ENCODE measurements at regions of chr9 and their contacts with region 1.

Region 1: DNA sequence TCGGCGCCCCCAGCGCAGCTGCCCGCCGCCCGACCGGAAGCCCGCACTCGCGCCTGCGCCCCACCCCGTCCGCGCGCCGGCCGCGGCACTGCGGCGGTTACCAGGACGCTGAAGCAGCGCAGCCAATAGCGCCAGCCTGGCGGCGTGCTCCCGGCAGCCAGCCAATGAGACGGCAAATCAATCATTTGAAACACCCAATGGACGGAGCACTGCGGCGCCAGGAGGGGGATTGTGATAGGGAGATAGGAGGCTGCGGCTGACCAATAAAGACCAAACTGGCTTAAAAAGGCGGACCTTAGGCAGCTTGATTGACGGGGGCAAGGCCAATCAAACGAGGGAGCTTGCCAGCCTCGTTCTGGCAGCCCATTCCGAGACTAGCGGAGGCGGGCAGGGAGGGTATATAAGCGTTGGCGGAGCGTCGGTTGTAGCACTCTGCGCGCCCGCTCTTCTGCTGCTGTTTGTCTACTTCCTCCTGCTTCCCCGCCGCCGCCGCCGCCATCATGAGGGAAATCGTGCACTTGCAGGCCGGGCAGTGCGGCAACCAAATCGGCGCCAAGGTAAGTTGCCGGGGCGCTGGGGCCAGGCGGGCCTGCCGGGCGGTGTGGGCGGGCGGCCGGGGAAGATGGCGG is at the start of gene TUBB4B:
- DNase-seq: peak; percentile 100
- H3K4me3 ChIP-seq: peak within 1 kb of the TSS; percentile 97
- H3K27ac ChIP-seq: peak within 1 kb of the TSS; percentile 98
- H3K4me1 ChIP-seq: peaks cover 44% of the 10 kb centered on the region
- H3K27me3 ChIP-seq: no peaks in the 10 kb centered on the region
- CTCF ChIP-seq: no peak
- total RNA-seq, gene TUBB4B: 645 and 714 TPM in 2 replicates

Region 2: DNA sequence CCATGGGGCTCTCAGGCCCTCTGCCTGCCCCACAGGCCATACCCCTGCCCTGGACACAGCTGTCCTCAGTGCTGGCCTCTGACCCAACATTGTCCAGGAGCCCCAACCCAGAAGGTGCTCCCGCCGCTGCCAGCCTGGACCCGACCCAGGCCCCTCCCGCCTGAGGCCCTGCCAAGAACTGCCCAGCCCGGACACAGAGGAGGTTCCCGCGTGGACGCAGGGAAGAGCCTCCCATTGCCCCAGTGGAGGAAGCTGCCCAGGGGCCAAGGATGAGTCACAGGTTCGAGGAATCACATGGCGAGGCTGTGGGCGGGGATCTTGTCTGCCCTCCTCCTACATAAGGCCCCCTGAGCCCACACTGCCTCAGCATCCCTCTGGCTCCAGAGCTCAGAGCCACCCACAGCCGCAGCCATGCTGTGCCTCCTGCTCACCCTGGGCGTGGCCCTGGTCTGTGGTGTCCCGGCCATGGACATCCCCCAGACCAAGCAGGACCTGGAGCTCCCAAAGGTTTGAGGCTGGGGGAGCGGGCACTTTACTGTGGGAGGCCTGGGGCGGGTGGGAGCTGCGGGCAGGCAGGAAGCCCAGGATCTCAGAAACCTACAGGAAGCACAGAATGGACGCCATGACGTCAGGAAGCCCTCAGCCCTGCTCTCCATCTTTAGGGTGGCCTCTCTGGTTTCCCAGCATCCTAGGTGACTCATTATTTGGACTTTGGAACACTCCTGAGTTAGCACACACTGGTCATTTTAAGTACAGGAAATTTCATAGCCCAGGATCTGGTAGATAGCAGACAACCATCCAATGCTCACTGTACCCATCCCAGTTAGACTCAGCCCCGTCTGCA is 1679.4 kb before region 1 on chr9 and contains the start of gene PAEP:
- CTCF ChIA-PET with region 1: no interaction called
- POLR2A ChIA-PET with region 1: no interaction called
- intact Hi-C with region 1: no loop called
- DNase-seq: no peak
- H3K4me3 ChIP-seq: no peak within 1 kb of the TSS
- H3K27ac ChIP-seq: no peak within 1 kb of the TSS
- H3K4me1 ChIP-seq: no peaks in the 10 kb centered on the region
- H3K27me3 ChIP-seq: peaks cover 4% of the 10 kb centered on the region
- CTCF ChIP-seq: no peak
- total RNA-seq, gene PAEP: not detected in 2 replicates

Region 3: DNA sequence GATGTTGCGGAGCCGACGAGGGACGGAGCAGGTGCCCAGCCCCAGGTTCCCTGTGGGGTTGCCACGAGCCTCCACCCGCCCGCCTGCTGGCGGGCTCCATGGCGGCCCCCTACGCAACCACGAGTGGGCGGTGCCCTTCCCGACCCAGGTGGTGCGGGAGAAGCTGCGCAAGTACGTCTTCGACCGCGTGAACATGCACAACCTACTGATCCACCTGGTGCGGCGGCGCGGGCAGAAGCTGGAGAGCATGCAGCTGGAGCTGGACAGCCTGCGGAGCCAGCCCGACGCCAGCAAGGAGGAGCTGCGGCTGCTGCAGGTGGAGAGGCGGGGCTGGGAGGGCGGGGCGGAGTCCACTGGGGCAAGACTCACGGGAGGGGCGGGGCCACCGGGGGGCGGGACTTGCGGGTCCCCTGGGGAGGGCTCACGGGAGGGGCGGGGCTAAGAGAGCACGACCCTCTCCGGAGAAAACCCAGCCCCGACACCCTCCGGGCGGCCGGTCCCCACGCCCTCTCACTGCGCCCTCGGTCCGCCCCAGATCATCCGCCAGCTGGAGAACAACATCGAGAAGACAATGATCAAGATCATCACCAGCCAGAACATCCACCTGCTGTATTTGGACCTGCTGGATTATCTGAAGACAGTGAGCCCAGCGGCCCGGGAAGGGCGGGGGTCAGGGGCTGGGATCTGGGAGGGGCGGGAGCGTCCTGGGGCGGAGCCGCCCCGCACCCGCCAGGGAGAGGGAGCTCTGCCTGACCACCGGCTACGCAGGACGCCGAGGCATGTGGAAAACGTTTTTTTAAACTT is 440.9 kb before region 1 on chr9:
- CTCF ChIA-PET with region 1: interaction called, 13 read pairs
- POLR2A ChIA-PET with region 1: no interaction called
- intact Hi-C with region 1: no loop called
- DNase-seq: peak; percentile 86
- H3K4me3 ChIP-seq: peak overlapping the region; percentile 55
- H3K27ac ChIP-seq: no peak overlapping the region
- H3K4me1 ChIP-seq: peaks cover 22% of the 10 kb centered on the region
- H3K27me3 ChIP-seq: no peaks in the 10 kb centered on the region
- CTCF ChIP-seq: no peak

Region 4: GRCh38 chr9:137123468-137123837 is 117.5 kb before region 1 on chr9:
- CTCF ChIA-PET with region 1: interaction called, 10 read pairs
- POLR2A ChIA-PET with region 1: no interaction called
- intact Hi-C with region 1: no loop called
- DNase-seq: no peak
- H3K4me3 ChIP-seq: no peak overlapping the region
- H3K27ac ChIP-seq: no peak overlapping the region
- H3K4me1 ChIP-seq: peaks cover 10% of the 10 kb centered on the region
- H3K27me3 ChIP-seq: no peaks in the 10 kb centered on the region
- CTCF ChIP-seq: no peak

Region 5: DNA sequence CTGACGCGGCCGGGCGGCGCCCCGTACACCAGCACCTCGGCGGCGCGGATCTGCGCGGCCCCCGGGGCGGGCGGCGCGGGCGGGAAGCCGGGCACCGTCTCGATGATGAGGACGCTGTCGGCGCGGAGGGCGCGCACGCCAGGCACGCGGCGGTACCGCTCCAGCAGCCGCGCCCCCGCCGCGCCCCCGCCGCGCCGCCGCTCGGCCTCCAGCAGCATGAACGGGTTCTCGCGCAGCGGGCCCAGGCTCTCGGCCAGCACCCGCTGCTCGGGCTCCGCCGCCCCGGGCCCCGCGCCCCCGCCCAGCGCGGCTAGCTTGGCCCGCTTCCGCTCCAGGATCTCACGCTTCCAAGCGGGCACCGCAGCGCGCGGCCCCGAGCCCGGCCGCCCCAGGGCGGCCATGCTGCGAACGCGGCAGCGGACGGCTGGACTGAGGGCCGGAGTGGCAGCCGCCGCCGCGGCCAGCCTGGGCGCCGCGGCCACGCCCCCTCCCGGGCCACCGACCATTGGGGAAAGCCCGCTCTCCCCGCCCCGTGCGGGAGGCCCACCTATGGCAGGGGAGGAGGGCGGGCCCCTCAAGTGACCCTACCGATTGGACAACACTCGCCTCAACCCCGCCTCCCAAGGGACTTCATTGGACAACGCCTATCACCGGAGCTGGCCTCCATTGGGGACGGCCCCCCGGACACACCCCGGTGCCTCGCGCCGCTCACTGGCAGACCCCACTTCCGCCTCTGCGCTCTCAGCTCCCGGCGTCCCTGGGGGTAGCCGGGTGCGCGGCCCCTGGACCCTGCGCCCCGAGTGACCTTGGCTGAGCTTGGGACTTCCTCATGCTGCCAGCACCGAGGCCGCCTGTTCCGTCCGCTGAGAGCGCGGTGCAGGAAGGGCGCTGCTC is 40.4 kb before region 1 on chr9 and contains the start of gene TPRN:
- CTCF ChIA-PET with region 1: interaction called, 9 read pairs
- POLR2A ChIA-PET with region 1: interaction called, 7 read pairs
- intact Hi-C with region 1: loop called (anchors 2 kb)
- DNase-seq: peak; percentile 100
- H3K4me3 ChIP-seq: peak within 1 kb of the TSS; percentile 59
- H3K27ac ChIP-seq: peak within 1 kb of the TSS; percentile 76
- H3K4me1 ChIP-seq: peaks cover 34% of the 10 kb centered on the region
- H3K27me3 ChIP-seq: no peaks in the 10 kb centered on the region
- CTCF ChIP-seq: no peak
- total RNA-seq, gene TPRN: 23.0 and 25.7 TPM in 2 replicates

Region 6: GRCh38 chr9:137254624-137255447 is 13.9 kb after region 1 on chr9 and contains the start of gene NELFB:
- CTCF ChIA-PET with region 1: interaction called, 11 read pairs
- POLR2A ChIA-PET with region 1: interaction called, 3 read pairs
- intact Hi-C with region 1: no loop called
- DNase-seq: peak; percentile 93
- H3K4me3 ChIP-seq: peak within 1 kb of the TSS; percentile 88
- H3K27ac ChIP-seq: peak within 1 kb of the TSS; percentile 88
- H3K4me1 ChIP-seq: peaks cover 15% of the 10 kb centered on the region
- H3K27me3 ChIP-seq: no peaks in the 10 kb centered on the region
- CTCF ChIP-seq: no peak
- total RNA-seq, gene NELFB: 72.6 and 78.1 TPM in 2 replicates

Region 7: GRCh38 chr9:137590462-137591383 is 349.7 kb after region 1 on chr9 and contains the start of gene ZMYND19:
- CTCF ChIA-PET with region 1: no interaction called
- POLR2A ChIA-PET with region 1: no interaction called
- intact Hi-C with region 1: no loop called
- DNase-seq: peak; percentile 93
- H3K4me3 ChIP-seq: peak within 1 kb of the TSS; percentile 94
- H3K27ac ChIP-seq: peak within 1 kb of the TSS; percentile 96
- H3K4me1 ChIP-seq: peaks cover 7% of the 10 kb centered on the region
- H3K27me3 ChIP-seq: no peaks in the 10 kb centered on the region
- CTCF ChIP-seq: no peak
- total RNA-seq, gene ZMYND19: 68.0 and 75.3 TPM in 2 replicates

Region 8: GRCh38 chr9:137924761-137925369 is 683.9 kb after region 1 on chr9:
- CTCF ChIA-PET with region 1: no interaction called
- POLR2A ChIA-PET with region 1: no interaction called
- intact Hi-C with region 1: no loop called
- DNase-seq: no peak
- H3K4me3 ChIP-seq: no peak overlapping the region
- H3K27ac ChIP-seq: no peak overlapping the region
- H3K4me1 ChIP-seq: no peaks in the 10 kb centered on the region
- H3K27me3 ChIP-seq: peaks cover 14% of the 10 kb centered on the region
- CTCF ChIP-seq: no peak

Measured in A673 (cell line).